ENCODE measurements at regions of chr19 and their contacts with region 1.

Region 1: DNA sequence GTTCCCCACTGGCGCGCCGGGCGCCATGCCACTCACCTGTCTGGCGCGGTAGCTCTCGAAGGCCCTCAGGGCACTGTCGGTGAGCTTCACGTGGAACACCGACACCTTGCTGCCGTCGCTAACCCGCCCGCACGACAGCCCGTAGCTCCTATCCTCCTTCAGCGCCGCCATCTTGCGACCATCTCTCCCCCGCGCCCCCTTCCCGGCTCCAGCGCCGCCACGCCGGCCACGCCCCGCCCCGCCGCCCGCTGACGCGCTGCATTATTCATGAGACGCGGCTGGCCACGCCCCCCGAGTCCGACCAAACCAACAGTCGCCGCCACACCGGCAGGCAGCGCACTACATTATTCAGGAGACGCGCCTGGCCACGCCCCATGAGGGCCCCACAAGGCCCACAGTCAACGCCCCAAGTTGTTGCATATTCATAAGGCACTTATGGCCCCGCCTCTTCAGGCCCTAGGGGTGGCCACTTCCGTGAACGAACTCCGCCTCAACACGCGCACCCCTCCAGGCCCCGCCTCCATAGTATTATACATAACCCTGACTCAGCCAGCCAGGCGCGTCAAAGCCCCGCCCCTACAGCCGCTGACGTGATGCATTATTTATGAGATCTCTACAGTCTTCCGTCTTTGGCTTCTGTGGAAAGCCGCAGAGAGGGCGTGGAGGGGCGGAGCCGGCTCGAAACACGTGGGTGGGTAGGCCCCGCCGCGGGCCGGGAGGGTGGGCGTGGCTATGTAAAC is at the start of gene ELL:
- DNase-seq: peak; percentile 100
- H3K4me3 ChIP-seq: peak within 1 kb of the TSS; percentile 86 to 98 (median 96)
- H3K27ac ChIP-seq: peak within 1 kb of the TSS; percentile 94 to 95
- H3K4me1 ChIP-seq: peaks cover 0 to 27% (median 15%) of the 10 kb centered on the region in 4 experiments
- H3K27me3 ChIP-seq: no peaks in the 10 kb centered on the region

Region 2: GRCh38 chr19:18503971-18504885 is 17.8 kb before region 1 on chr19:
- CTCF ChIA-PET with region 1: interaction called, 56 read pairs
- POLR2A ChIA-PET with region 1: interaction called, 8 read pairs
- DNase-seq: no peak
- H3K4me3 ChIP-seq: no peak overlapping the region
- H3K27ac ChIP-seq: no peak overlapping the region
- H3K4me1 ChIP-seq: peaks cover 5 to 88% (median 80%) of the 10 kb centered on the region in 4 experiments
- H3K27me3 ChIP-seq: no peaks in the 10 kb centered on the region

Region 3: DNA sequence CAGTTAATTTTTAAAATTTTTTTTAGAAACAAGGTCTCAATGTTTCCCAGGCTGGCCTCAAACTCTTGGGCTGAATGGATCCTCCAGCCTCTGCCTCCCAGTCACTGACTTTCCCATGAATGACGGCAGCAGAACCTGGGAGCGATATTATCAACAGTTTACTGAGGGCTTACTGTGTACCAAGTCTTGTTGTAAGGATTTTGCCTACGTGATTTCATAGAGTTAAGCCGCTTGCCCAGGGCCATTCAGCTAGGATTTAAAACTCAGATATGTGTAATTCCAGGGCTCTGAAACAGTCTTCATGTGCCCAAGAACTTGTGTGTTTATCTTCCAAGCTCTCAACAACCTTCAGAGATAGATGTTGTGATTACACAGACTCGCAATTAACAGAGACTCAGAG is 29.6 kb after region 1 on chr19:
- CTCF ChIA-PET with region 1: no interaction called
- POLR2A ChIA-PET with region 1: no interaction called
- DNase-seq: no peak
- H3K4me3 ChIP-seq: no peak overlapping the region
- H3K27ac ChIP-seq: no peak overlapping the region
- H3K4me1 ChIP-seq: no peaks in the 10 kb centered on the region
- H3K27me3 ChIP-seq: no peaks in the 10 kb centered on the region

Region 4: GRCh38 chr19:18762125-18763023 is 240.3 kb after region 1 on chr19:
- CTCF ChIA-PET with region 1: no interaction called
- POLR2A ChIA-PET with region 1: no interaction called
- DNase-seq: peak in 2 of 3 donors; percentile 47 to 68
- H3K4me3 ChIP-seq: no peak overlapping the region
- H3K27ac ChIP-seq: no peak overlapping the region
- H3K4me1 ChIP-seq: peaks cover 0 to 19% (median 10%) of the 10 kb centered on the region in 4 experiments
- H3K27me3 ChIP-seq: no peaks in the 10 kb centered on the region

Measured in common myeloid progenitor, CD34-positive (primary cell).